ENCODE measurements at regions of chr6 and their contacts with region 1.

Region 1: DNA sequence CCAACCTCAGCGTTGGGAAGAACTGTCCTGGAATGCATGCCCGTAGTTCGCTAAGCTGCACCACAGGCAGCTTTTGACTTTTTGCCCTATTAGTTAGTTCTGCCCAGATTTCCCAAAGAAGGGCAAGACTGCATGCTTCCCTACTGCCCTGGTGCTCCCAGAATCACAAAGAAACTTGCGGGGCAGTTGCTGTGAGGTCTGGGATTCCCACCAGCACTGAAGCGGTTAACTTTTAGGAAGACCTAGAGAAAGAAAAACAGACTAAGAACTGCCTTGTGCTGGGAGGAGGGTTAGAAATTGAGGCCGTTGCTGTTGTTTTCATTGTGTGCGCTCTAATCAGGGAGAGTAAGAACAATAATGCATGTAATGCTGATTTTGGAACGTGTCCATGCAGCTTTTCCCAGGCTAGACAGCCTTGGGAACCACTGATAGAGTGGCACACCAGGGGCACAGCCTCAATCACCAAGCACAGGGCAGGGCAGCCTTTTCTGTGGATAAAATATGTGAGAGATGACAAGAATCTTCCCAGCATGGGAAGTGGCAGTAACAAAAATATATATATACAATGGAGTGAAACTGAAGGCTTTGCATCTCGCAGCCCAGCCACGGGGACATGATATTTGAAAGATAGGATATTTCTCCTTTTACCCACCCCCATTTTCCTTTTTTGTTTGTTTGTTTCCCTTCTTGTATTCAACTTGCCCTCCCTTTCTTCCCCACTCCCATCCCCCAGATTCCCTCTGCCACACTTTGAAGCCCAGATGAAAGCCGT is 137.7 kb upstream of the HEY2 start:
- DNase-seq: no peak
- H3K4me3 ChIP-seq: no peak overlapping the region
- H3K27ac ChIP-seq: no peak overlapping the region
- H3K4me1 ChIP-seq: peaks cover 0 to 9% (median 0%) of the 10 kb centered on the region in 4 donors
- H3K27me3 ChIP-seq: no peaks in the 10 kb centered on the region
- CTCF ChIP-seq: no peak
- EP300 ChIP-seq: no peak
- POLR2A ChIP-seq: no peak

Region 2: GRCh38 chr6:125586074-125586473 is 25.7 kb before region 1 on chr6:
- in situ Hi-C with region 1: no loop called
- intact Hi-C with region 1: loop called (anchors 1 kb)
- DNase-seq: no peak
- H3K4me3 ChIP-seq: no peak overlapping the region
- H3K27ac ChIP-seq: no peak overlapping the region
- H3K4me1 ChIP-seq: no peaks in the 10 kb centered on the region
- H3K27me3 ChIP-seq: no peaks in the 10 kb centered on the region
- CTCF ChIP-seq: no peak
- EP300 ChIP-seq: no peak
- POLR2A ChIP-seq: no peak